Mammary epithelial cell (primary cell): ENCODE measurements at regions of chr11 and their contacts with region 1.

Region 1: DNA sequence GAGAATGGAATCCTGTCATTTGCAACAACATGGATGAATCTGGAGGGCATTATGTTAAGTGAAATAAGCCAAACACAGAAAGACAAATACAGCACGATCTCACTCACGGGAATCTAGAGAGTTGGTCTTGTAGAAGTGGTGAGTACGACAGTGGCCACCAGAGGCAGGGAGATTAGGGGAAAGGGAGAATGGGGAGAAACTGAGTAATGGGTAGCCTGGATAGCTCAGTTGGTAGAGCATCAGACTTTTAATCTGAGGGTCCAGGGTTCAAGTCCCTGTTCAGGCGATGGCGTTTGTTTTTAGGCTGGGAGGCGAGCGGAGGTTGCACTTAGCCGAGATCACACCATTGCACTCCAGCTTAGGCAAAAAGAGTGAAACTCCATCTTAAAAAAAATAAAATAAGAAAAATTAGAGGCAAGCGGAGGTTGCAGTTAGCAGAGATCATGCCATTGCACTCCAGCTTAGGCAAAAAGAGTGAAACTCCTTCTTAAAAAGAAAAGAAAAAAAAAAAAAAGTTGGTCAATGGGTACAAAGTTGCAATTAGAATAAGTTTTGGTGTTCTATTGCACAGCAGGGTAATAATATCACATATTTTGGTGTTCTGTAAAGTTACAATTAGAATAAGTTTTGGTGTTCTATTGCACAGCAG is 95.7 kb upstream of the UBASH3B start:
- DNase-seq: peak; percentile 20
- H3K4me3 ChIP-seq: no peak overlapping the region
- H3K27ac ChIP-seq: no peak overlapping the region
- H3K4me1 ChIP-seq: no peaks in the 10 kb centered on the region
- H3K27me3 ChIP-seq: peaks cover 4% of the 10 kb centered on the region
- CTCF ChIP-seq: no peak

Region 2: GRCh38 chr11:122523846-122524805 is 35.7 kb before region 1 on chr11:
- CTCF ChIA-PET with region 1: no interaction called
- dilution Hi-C with region 1: loop called (anchors 5 kb)
- in situ Hi-C with region 1: no loop called
- intact Hi-C with region 1: no loop called
- DNase-seq: peak; percentile 9
- H3K4me3 ChIP-seq: no peak overlapping the region
- H3K27ac ChIP-seq: no peak overlapping the region
- H3K4me1 ChIP-seq: no peaks in the 10 kb centered on the region
- H3K27me3 ChIP-seq: no peaks in the 10 kb centered on the region
- CTCF ChIP-seq: no peak

Region 3: DNA sequence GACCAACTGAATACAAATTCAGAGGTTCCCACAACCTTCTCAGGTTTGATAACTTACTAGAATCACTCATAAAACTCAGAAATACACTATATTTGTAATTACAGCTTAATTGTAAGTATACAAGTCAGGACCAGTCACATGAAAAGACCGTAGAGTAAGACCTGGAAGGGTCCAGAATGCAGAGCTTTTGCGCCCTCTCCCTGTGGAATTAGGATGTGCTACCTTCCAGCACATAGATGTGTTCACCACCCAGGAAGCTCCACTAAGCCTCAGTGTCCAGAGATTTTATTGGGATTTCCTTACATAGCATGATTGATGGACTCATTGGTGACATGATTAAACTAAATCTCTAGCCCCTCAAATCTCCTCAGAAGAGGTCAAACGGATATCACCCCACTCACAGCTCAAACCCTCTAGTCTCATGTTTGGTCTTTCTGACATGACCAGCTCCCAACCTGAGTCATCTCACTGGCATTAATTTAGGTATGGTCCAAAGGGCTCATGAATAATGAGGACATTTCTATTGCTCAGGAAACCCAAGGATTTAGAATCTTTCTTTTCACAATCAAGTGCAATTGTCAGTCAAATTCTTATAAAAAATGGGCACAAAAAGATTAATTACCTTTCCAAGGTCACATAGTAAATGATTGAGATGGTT is 18.4 kb after region 1 on chr11:
- CTCF ChIA-PET with region 1: no interaction called
- dilution Hi-C with region 1: no loop called
- in situ Hi-C with region 1: no loop called
- intact Hi-C with region 1: no loop called
- DNase-seq: no peak
- H3K4me3 ChIP-seq: no peak overlapping the region
- H3K27ac ChIP-seq: no peak overlapping the region
- H3K4me1 ChIP-seq: peaks cover 10% of the 10 kb centered on the region
- H3K27me3 ChIP-seq: no peaks in the 10 kb centered on the region
- CTCF ChIP-seq: no peak